BJ (cell line): ENCODE measurements at regions of chr5 and their contacts with region 1.

Region 1: DNA sequence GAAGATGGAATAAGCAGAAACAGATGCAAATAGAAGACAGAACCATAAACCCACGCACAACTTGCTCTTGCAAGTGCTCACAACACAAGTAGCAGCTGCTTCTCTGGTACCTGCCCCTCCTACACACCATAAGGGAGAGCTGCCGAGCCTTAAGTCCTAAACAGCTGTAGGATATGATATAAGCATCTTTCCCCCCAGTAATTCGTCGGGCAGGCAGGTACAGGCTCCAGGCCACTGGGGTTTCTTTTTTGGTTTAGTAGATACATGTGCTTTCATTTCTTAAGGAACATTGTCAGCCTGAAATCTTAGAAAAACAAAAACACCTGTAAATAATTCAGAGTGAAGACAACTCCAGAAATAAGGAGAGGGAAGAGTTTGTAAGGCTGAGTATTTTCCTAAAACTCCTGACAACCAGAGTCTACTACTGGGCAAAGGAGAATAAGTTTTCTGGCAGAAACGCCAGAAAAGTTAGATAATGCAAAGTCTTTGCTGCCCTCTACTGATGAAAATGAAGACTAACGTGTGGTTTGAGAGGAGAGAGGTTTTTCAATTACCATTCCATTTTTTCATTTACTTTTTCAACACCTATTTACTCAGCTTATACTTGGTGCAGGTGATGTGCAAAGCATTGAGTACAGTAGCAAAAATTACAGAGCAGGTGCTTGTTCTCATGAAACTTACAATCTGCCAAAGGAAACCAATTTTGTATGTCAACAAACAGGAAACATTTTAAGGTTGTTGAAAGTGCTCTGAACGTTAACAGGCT is 20.1 kb upstream of the TCERG1 start:
- DNase-seq: no peak
- H3K4me3 ChIP-seq: no peak overlapping the region
- H3K27me3 ChIP-seq: peaks cover 4% of the 10 kb centered on the region; the same call in 1 of the 2 replicates
- CTCF ChIP-seq: peak; percentile 64

Region 2: DNA sequence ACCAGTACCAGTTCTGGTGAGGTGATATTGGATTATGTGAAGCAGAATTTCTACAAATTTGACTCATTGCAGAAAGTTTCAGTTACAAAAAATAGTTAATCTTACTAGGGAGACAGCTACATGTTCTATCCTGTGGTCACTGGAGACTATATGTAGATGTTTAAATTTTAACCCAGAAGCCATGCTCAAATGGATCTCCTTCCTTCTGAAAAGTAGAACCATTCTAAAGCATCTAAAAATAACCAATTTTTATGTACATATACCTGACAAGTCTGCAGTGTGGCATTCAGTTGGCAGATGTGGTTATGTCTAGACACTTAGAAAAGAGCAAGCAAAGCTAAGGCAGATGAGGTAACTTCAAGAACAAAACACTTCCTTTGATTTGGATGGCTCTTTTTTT is 153.9 kb before region 1 on chr5:
- CTCF ChIA-PET with region 1: no interaction called
- POLR2A ChIA-PET with region 1: no interaction called
- DNase-seq: no peak
- H3K4me3 ChIP-seq: no peak overlapping the region
- H3K27me3 ChIP-seq: no peaks in the 10 kb centered on the region
- CTCF ChIP-seq: no peak

Region 3: DNA sequence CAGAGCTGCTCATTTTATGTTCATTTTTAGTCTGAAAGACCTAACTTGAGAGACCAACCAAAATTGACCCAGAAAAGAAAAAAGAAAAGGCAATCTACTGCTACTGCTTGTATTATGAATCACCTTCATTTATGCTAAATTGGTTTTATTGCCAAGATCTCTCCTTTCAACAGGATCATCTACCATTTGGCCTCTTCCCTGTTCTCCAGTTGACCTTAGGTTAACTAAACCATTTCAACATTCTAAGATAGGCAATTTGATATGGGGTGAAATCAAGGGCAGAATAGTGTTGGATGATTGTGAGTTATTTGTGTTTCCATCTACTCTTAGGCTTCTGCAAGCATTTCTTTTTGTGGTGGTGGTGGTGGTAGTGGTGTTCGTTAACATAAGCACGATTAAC is 136.7 kb before region 1 on chr5:
- CTCF ChIA-PET with region 1: interaction called, 14 read pairs
- POLR2A ChIA-PET with region 1: no interaction called
- DNase-seq: no peak
- H3K4me3 ChIP-seq: no peak overlapping the region
- H3K27me3 ChIP-seq: no peaks in the 10 kb centered on the region
- CTCF ChIP-seq: no peak

Region 4: DNA sequence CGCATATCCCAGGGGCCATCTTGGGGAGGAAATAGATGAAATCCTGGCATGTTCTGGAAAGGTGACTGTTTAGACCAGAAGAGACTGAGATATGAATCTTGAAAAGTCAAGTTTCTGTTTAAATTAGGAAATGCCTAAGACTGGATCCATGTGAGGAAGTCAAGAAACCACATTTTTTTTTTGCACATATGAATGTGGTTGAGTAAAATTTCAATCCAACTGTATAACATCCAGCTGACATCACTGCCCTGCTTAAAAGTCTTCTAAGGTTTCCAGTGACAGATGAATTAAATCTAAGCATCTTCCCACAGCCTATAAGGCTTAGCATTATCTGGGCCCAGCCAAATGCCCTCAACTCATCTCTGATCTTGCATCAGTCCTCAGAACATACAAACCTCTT is 27.6 kb before region 1 on chr5:
- CTCF ChIA-PET with region 1: interaction called, 5 read pairs
- POLR2A ChIA-PET with region 1: interaction called, 16 read pairs
- DNase-seq: no peak
- H3K4me3 ChIP-seq: no peak overlapping the region
- H3K27me3 ChIP-seq: peaks cover 3% of the 10 kb centered on the region
- CTCF ChIP-seq: no peak